ENCODE measurements at regions of chr12 and their contacts with region 1.

Region 1: GRCh38 chr12:79174626-79175025 is 310.1 kb downstream of the SYT1 start:
- DNase-seq: peak; percentile 70
- ATAC-seq: peak; percentile 83
- H3K4me3 ChIP-seq: no peak overlapping the region
- H3K27ac ChIP-seq: no peak overlapping the region
- H3K4me1 ChIP-seq: no peaks in the 10 kb centered on the region
- H3K27me3 ChIP-seq: no peaks in the 10 kb centered on the region
- CTCF ChIP-seq: peak; percentile 62

Region 2: GRCh38 chr12:78392918-78393317 is 781.7 kb before region 1 on chr12:
- CTCF ChIA-PET with region 1: interaction called, 8 read pairs
- POLR2A ChIA-PET with region 1: no interaction called
- intact Hi-C with region 1: loop called (anchors 5 kb)
- DNase-seq: peak; percentile 56
- ATAC-seq: peak; percentile 62; the same call in 1 of the 2 replicates
- H3K4me3 ChIP-seq: no peak overlapping the region
- H3K27ac ChIP-seq: no peak overlapping the region
- H3K4me1 ChIP-seq: 0 out of 2 replicates have a peak, but pooled peaks cover under 1% of the 10 kb centered on the region
- H3K27me3 ChIP-seq: no peaks in the 10 kb centered on the region
- CTCF ChIP-seq: peak; percentile 63

Region 3: GRCh38 chr12:78562368-78563205 is 612.0 kb before region 1 on chr12:
- CTCF ChIA-PET with region 1: no interaction called
- POLR2A ChIA-PET with region 1: no interaction called
- intact Hi-C with region 1: loop called (anchors 5 kb)
- DNase-seq: peak; percentile 44
- ATAC-seq: peak; percentile 55
- H3K4me3 ChIP-seq: no peak overlapping the region
- H3K27ac ChIP-seq: no peak overlapping the region
- H3K4me1 ChIP-seq: no peaks in the 10 kb centered on the region
- H3K27me3 ChIP-seq: no peaks in the 10 kb centered on the region
- CTCF ChIP-seq: peak; percentile 72

Region 4: DNA sequence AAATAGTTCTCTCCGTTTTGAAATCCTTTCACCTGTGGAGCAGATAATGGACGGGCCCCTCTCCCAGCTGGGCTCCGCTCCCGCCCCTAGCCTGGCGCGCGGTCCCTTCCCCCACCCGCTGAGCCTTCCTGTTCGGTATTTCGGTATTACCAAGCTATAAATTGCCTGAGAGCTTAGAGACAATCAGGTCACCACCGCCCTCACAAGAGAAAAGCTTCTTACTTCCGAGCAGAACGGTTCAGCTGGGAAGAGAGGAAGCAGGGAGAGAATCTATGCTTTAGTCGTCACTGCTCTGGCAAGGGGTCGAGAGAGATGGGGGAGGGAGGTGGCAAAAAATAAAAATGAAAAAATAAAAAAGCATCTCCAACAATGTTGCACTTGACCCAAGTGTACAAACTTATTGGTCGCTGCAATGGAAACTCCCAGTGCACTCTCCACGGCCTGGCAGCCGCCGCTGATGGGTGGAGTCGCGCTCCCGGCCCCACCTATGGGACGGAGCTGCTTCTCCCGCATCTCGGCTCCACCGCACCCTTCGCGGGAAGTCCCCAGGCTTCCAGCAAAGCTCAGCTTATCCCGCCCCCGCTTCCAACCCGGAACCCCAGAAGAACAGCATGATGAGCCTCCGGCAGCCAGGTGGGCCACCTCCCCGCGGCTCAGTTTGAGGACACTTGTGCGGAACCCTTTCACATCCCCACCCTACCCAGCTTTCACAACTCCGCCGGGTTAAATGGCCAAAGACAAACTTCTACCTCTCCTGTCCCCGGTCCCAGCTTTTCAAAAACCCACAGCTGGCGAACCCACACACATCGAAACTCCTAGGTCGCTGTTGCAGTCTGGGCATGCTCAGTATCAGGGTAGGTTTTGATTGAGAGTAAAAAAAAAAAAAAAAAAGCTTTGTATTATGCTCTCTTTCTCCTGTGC is 310.9 kb before region 1 on chr12:
- CTCF ChIA-PET with region 1: no interaction called
- POLR2A ChIA-PET with region 1: no interaction called
- intact Hi-C with region 1: loop called (anchors 10 kb)
- DNase-seq: peak; percentile 53
- ATAC-seq: peak; percentile 73
- H3K4me3 ChIP-seq: peak overlapping the region; percentile 79
- H3K27ac ChIP-seq: no peak overlapping the region
- H3K4me1 ChIP-seq: no peaks in the 10 kb centered on the region
- H3K27me3 ChIP-seq: peaks cover 6% of the 10 kb centered on the region
- CTCF ChIP-seq: no peak

Region 5: GRCh38 chr12:78977304-78977867 is 197.2 kb before region 1 on chr12:
- CTCF ChIA-PET with region 1: no interaction called
- POLR2A ChIA-PET with region 1: no interaction called
- intact Hi-C with region 1: no loop called
- DNase-seq: peak; percentile 17
- ATAC-seq: peak; percentile 49; the same call in 1 of the 2 replicates
- H3K4me3 ChIP-seq: no peak overlapping the region
- H3K27ac ChIP-seq: no peak overlapping the region
- H3K4me1 ChIP-seq: no peaks in the 10 kb centered on the region
- H3K27me3 ChIP-seq: no peaks in the 10 kb centered on the region
- CTCF ChIP-seq: no peak

Region 6: DNA sequence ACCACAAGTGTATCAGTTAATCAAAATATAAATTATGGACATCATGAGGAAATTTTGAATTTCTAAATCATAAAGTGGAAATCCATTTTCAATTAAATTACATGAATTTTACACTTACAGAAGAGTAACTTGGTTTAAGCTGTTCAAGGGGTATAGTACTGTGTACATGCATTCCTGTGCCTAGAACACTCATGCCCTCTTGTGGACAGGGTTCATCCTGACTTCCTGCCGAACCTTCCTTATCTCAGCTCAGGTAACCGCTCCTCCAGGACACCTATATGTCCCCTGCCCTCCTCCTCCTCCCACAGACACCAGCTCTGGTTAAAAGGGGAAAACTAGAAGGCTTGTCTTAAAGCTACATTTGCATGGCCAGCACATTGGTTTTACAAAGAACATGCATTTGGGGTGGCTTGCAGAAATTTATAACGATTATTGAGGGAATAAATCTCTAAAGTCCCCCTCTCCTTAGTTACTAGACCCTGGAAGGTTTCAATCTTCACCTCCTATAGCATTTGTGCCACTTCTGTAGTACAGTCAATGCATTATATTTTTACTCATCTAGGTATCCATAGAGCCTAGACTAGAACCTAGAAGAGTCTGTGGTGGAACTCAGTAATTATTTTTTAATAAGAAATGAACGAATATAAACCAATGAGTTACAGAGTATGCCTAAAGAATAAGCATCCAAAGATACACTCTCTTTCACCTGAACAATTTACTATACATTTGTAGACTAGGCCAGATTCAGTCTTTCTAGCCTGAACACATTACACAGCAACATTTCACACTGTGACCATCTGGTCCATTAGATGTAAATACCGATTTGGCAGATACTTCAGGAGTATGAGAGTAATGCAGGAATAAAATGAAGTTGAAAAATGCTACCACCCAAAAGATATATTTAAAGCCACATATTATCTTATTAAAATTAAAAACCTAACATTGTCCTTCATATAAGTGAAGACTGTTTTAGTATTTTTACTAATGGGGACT is 170.5 kb after region 1 on chr12:
- CTCF ChIA-PET with region 1: no interaction called
- POLR2A ChIA-PET with region 1: no interaction called
- intact Hi-C with region 1: loop called (anchors 2 kb)
- DNase-seq: peak; percentile 77
- ATAC-seq: peak; percentile 99
- H3K4me3 ChIP-seq: no peak overlapping the region
- H3K27ac ChIP-seq: no peak overlapping the region
- H3K4me1 ChIP-seq: no peaks in the 10 kb centered on the region
- H3K27me3 ChIP-seq: peaks cover 4% of the 10 kb centered on the region; the same call in 1 of the 2 replicates
- CTCF ChIP-seq: peak; percentile 91